Heart right ventricle (tissue), 16 donors: ENCODE measurements at regions of chr19 and their contacts with region 1.

Region 1: DNA sequence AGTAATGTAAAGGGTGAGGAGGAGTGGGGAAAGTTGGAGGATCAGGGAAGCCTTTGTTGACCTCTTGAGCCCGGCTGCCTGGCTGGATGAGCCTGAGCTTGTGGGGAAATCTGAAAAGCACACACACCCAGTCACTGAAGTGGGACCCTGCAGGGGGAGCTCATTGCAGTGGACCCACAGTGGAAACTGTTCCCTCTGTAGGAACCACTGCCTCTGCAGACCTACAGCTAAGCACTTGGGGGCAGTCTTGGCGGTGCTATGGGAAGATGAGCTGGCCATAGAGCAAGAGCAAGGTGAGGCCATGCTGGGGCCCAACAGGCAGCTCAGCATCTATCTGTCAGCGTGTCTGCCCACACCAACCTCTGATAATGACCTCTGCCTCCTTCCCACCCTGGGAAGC is 294.8 kb downstream of the TSHZ3 start:
- DNase-seq: peak in 1 of 2 donors; percentile 14
- ATAC-seq: peak in 6 of 8 donors; percentile 46 to 76 (median 58)
- H3K4me3 ChIP-seq: no peak overlapping the region
- H3K27ac ChIP-seq: no peak overlapping the region
- H3K4me1 ChIP-seq: no peaks in the 10 kb centered on the region
- H3K27me3 ChIP-seq: peaks cover 0 to 8% (median 0%) of the 10 kb centered on the region in 7 donors
- CTCF ChIP-seq: peak in 7 of 9 donors; percentile 35 to 65 (median 45)

Region 2: DNA sequence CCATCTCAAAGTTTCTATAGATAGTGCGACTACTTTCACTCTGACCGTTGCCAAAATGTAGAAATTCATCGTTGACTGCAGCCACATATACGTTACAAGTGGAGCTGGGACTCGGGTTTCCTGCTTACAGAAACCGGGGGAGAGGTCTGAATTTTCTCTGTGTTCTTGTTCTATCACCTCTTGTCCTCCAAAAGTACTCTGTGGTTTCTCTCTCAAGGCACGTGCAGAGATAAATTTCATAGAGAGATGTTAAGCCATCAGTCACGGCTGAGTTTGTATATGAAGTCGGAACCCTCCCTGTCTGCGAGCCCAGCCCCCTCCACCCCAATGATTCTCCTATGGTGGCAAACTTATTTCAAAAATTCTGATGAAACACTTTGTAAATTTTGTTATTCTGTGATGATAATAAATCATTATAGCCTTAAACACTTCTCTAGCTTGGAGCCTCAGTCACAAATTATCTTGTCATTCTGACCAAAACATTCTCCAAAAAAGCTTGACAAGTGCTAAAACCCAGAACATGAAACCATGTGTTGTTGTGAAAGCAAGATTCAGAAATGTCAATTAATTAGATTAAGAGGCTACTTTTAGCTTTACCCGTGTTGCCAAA is 207.3 kb after region 1 on chr19:
- intact Hi-C with region 1: loop called in 1 of 10 experiments (anchors 10 kb)
- DNase-seq: no peak
- ATAC-seq: no peak
- H3K4me3 ChIP-seq: no peak overlapping the region
- H3K27ac ChIP-seq: no peak overlapping the region
- H3K4me1 ChIP-seq: peaks cover 0 to 18% (median 6%) of the 10 kb centered on the region in 9 donors
- H3K27me3 ChIP-seq: peaks cover 0 to 34% (median 6%) of the 10 kb centered on the region in 7 donors
- CTCF ChIP-seq: no peak

Region 3: DNA sequence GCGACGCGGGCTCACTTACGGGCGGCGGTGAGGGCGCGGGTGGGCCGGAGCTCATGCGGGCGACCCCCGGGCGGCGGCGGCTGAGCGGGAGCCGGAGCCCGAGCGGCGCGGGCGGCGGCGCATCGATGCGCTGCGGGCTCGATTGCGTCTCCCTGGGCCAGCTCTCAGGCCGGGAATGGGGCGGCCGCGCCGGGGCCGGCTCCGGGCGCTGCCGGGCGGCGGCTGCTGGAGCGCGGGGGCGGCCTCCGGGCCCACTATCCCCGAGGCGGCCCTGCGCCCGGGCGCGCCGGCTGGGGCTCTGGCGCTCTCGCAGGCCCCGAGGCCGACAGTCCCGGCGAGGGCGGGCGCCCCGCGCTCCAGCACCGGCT is 296.3 kb after region 1 on chr19:
- intact Hi-C with region 1: loop called in 1 of 10 experiments (anchors 10 kb)
- DNase-seq: peak; percentile 65 to 66
- ATAC-seq: peak; percentile 26 to 50 (median 44)
- H3K4me3 ChIP-seq: peak overlapping the region; percentile 77 to 100 (median 92)
- H3K27ac ChIP-seq: peak overlapping the region; percentile 78 to 98 (median 94)
- H3K4me1 ChIP-seq: peaks cover 6 to 53% (median 21%) of the 10 kb centered on the region in 9 donors
- H3K27me3 ChIP-seq: peaks cover 0 to 67% (median 40%) of the 10 kb centered on the region in 7 donors
- CTCF ChIP-seq: no peak